ENCODE measurements at regions of chr12 and their contacts with region 1.

Region 1: DNA sequence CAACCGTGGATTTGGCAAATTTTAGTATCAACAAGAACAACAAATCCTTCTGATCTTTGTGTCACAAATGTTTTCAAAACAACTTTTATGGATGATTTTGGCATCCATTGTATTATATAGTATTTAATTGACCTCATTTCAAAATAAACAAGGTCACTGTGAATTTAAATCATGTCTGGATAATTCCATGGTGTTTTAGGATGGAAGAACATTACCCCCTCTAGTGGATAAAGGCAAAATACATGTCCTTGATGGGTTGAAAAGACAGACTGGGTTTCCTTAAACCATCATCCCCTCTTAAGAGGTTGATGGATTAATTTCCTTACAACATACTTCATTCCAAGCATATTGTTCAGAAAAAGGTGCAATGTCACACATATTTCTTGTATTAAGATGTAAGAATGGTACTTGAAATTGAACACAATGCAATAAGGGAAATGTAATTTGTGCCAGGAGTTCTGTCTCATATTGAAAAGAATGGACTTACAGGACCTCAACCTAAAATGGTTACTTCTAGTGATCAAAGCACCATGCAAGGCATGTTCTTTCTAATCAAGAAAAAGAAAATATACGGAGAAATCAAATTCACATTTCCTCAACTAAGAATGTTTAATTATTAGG is 352.0 kb downstream of the BCAT1 start:
- DNase-seq: no peak
- ATAC-seq: no peak
- H3K4me3 ChIP-seq: no peak overlapping the region
- H3K27ac ChIP-seq: no peak overlapping the region
- H3K4me1 ChIP-seq: peaks cover 0 to 6% (median 0%) of the 10 kb centered on the region in 12 donors
- H3K27me3 ChIP-seq: no peaks in the 10 kb centered on the region
- CTCF ChIP-seq: peak; percentile 41 to 68 (median 55)
- POLR2A ChIP-seq: no peak

Region 2: DNA sequence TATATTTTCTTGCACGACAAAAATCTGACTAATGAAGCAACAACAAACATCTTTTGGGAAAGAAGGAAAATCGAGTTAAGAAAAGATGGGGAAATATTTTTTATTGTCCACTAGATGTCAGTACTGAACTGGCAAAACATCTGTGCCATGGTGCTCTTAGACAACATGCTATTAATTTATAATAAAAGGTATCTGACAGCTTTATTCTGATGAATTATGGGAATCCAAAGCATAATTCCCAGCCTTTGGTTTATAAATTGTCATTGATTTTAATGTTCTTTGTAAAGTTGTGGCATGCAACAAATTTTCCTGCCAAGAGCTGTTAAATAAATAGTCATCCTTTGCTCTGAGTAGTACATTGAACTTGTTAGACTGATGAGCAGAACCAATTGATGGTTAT is 1740.7 kb before region 1 on chr12:
- intact Hi-C with region 1: loop called in 1 of 10 experiments (anchors 10 kb)
- DNase-seq: no peak
- ATAC-seq: no peak
- H3K4me3 ChIP-seq: no peak overlapping the region
- H3K27ac ChIP-seq: no peak overlapping the region
- H3K4me1 ChIP-seq: no peaks in the 10 kb centered on the region
- H3K27me3 ChIP-seq: peaks cover 0 to 8% (median 3%) of the 10 kb centered on the region in 9 donors
- CTCF ChIP-seq: peak; percentile 38 to 72 (median 52)
- POLR2A ChIP-seq: no peak

Region 3: DNA sequence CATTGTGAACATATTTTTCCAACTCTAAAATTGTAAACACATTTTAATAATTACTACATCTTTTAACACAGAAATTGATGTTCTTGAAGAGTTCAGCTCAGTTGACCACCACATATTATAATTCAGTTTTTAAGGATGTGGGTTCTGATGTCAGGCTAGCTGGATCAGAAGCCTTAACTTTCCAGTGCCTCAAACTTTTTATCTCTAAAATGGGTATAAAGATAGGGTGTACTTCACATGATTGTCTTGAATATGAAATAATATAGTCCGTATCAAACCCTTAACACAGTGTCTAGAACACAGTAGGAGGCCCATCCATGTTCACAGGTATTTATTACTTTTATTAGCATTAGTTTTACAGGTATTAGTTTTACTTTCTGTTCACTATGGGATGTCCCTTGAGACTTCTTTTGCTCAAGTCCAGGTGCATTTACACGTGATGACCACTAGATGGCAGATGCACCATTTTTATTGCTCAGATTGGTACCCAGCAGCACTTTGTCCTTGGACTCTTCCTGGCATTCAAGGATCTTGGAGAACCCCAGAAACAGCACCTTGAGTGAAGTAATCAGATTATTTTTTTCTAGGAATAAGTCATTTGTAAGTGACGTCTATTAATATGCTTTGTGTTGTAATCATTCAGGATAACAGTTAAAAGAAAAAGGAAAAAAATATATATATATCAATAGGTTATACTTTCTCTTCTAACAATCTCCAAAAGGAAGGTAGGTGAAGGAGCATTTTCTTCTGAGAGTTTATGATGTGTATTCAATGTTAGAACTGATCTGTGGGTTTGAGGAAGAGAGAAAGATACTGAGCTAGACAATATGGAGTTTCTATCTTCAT is 1391.7 kb before region 1 on chr12:
- intact Hi-C with region 1: loop called in 4 of 10 experiments (anchors 5 to 10 kb)
- DNase-seq: peak in 1 of 5 donors; percentile 13
- ATAC-seq: peak in 2 of 4 donors; percentile 57 to 65
- H3K4me3 ChIP-seq: no peak overlapping the region
- H3K27ac ChIP-seq: no peak overlapping the region
- H3K4me1 ChIP-seq: no peaks in the 10 kb centered on the region
- H3K27me3 ChIP-seq: no peaks in the 10 kb centered on the region
- CTCF ChIP-seq: peak; percentile 74 to 96 (median 90)
- POLR2A ChIP-seq: no peak

Region 4: GRCh38 chr12:24109381-24110039 is 487.4 kb before region 1 on chr12:
- intact Hi-C with region 1: loop called in 1 of 10 experiments (anchors 10 kb)
- DNase-seq: no peak
- ATAC-seq: no peak
- H3K4me3 ChIP-seq: no peak overlapping the region
- H3K27ac ChIP-seq: no peak overlapping the region
- H3K4me1 ChIP-seq: no peaks in the 10 kb centered on the region
- H3K27me3 ChIP-seq: no peaks in the 10 kb centered on the region
- CTCF ChIP-seq: peak in 11 of 12 donors; percentile 20 to 53 (median 37)
- POLR2A ChIP-seq: no peak

Region 5: DNA sequence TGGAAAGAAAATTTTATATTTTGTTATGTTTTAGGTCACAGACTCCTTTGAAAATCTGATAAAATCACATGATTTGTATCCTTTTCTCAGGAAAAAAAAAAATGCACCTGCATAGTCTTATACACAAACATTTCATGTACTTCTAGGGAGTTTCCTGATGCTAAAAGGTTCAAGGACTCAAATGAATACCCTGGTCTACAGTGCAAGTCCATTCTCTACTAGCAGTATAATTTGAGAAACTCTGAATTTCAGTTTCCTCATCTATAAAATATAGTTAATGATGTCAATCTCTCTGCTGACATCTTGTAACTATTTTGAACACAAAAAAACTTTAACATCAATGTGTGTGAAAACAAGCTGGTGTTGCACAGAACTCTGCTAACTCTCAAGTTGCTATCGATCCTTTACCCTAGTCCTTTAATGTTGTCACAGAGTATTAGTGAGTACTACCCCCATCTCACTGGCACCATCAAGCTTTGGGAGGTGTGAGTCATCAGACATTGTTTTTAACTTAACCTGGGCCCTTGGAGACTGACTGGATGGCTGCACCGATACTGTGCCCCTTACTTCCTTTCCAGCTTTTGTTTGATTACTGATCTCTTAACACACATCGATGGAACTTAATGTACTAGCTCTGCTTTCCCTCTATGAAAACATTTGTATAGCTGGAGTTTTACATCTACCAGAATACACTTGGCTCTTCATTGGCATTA is 395.5 kb before region 1 on chr12:
- intact Hi-C with region 1: no loop called
- DNase-seq: no peak
- ATAC-seq: no peak
- H3K4me3 ChIP-seq: no peak overlapping the region
- H3K27ac ChIP-seq: no peak overlapping the region
- H3K4me1 ChIP-seq: no peaks in the 10 kb centered on the region
- H3K27me3 ChIP-seq: no peaks in the 10 kb centered on the region
- CTCF ChIP-seq: no peak
- POLR2A ChIP-seq: no peak

Region 6: DNA sequence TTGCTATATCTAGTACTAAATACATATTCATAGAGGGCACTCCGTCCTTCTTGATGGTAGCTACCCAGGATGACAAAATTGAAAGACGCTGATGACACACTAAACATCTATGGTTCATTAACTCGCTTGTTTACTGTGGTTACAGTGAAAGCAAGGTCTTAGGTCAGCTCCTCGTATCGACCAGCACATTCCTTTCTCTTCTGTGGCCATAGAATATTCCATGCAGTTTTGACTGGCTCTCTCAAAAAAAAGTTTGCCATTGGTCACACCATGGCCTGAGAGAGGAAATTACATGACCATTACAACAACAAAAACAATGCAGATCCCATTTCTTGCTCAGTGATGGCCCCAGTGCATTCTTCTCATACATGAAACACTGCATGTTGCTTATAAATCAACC is 236.0 kb before region 1 on chr12:
- intact Hi-C with region 1: loop called in 2 of 10 experiments (anchors 2 to 10 kb)
- DNase-seq: no peak
- ATAC-seq: no peak
- H3K4me3 ChIP-seq: no peak overlapping the region
- H3K27ac ChIP-seq: no peak overlapping the region
- H3K4me1 ChIP-seq: peaks cover 0 to 5% (median 0%) of the 10 kb centered on the region in 12 donors
- H3K27me3 ChIP-seq: no peaks in the 10 kb centered on the region
- CTCF ChIP-seq: no peak
- POLR2A ChIP-seq: no peak

Region 7: DNA sequence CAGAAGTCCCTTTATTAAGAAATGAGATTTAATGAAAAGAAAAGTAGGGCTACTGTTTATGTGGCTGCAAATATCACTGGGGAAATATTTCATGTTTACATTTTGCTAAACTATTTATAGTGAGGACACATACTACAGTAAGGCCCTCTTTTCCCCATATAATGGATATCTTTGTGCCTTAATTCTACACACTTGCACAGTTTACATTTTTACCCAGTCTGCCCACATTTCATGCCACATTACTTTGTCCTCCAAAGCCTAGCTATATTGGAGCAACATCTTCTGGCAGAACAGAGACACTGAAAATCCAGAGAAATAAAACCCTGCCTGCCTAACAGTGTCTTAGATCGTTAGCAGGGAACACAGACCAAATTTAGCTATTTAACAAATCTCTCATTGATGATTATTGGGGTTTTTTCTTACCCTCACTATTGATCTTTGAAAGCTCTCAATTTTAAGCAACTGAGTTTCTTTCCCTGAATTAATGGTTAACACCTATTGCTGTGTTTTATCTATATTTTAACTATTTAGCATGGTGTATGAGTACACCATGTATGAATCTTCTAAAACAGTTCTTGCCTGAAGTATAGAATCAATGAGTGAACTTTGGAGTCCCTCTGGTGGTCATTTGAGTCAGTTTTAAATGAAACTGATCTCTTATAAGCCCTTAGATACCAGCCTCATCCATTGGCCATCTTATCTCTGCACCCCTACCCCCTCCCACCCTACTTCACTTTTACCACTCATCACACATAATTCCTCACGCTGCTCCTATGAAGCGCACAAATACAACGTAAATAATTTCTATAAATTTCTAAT is 181.8 kb after region 1 on chr12:
- intact Hi-C with region 1: loop called in 1 of 10 experiments (anchors 10 kb)
- DNase-seq: no peak
- ATAC-seq: no peak
- H3K4me3 ChIP-seq: no peak overlapping the region
- H3K27ac ChIP-seq: no peak overlapping the region
- H3K4me1 ChIP-seq: no peaks in the 10 kb centered on the region
- H3K27me3 ChIP-seq: peaks cover 0 to 6% (median 0%) of the 10 kb centered on the region in 9 donors
- CTCF ChIP-seq: peak in 8 of 12 donors; percentile 5 to 42 (median 26)
- POLR2A ChIP-seq: no peak

Measured in heart left ventricle (tissue), 16 donors.